Left lung (tissue), 14 donors: ENCODE measurements at regions of chr7 and their contacts with region 1.

Region 1: DNA sequence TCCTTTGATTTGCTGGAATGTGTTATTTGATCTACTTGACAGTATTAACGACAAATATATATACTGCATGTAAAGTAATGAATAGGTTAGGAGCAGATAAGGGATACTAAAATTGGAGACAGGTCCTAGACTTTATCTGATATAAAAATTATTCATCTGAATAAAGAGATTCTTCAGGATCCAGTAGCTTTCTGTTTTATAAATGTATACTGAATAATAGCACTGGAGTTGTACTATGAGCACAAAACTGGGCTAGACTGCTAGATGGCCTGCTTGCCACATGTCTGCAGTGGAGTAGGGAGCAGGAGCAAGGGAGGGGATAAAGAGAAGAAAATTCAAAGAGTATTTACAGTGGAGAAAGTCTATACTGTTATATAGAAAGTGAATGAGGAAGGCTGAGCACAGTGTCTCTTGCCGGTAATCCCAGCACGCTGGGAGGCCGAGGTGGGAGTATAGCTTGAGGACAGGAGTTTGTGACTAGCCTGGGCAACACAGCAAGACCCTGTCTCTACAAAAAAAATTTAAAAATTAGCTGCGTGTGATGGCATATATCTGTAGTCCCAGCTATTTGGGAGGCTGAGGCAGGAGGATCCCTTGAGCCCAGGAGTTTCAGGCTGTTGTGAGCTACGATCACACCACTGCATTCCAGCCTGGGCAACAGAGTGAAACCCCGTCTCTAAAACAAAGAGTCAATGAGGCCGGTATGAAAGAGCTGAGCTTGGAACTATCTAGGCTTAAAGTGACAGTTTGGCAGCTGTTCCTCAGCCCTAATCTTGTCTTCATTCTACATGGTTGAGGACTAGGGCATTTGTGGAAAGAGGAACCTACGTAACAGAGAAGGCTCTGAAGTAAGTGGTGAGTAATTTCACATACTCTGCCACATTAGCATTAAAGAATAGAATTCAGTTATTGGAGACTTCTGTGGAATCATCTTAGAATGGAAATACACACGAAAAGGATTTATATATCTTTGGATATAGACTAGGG is 41.8 kb downstream of the CD36 start:
- DNase-seq: no peak
- ATAC-seq: peak; percentile 65
- H3K4me3 ChIP-seq: no peak overlapping the region
- H3K27ac ChIP-seq: no peak overlapping the region
- H3K4me1 ChIP-seq: peaks cover 0 to 4% of the 10 kb centered on the region in 2 donors
- H3K27me3 ChIP-seq: no peaks in the 10 kb centered on the region
- CTCF ChIP-seq: no peak

Region 2: GRCh38 chr7:80439894-80440821 is 240.1 kb before region 1 on chr7:
- intact Hi-C with region 1: loop called in 1 of 2 experiments (anchors 10 kb)
- DNase-seq: peak in 2 of 4 donors; percentile 39 to 54
- ATAC-seq: peak; percentile 72
- H3K4me3 ChIP-seq: no peak overlapping the region
- H3K27ac ChIP-seq: peak overlapping the region in 1 of 2 donors; percentile 70
- H3K4me1 ChIP-seq: peaks cover 0 to 38% of the 10 kb centered on the region in 2 donors
- H3K27me3 ChIP-seq: no peaks in the 10 kb centered on the region
- CTCF ChIP-seq: no peak